K562 (cell line): ENCODE measurements at regions of chr1 and their contacts with region 1.

Region 1: DNA sequence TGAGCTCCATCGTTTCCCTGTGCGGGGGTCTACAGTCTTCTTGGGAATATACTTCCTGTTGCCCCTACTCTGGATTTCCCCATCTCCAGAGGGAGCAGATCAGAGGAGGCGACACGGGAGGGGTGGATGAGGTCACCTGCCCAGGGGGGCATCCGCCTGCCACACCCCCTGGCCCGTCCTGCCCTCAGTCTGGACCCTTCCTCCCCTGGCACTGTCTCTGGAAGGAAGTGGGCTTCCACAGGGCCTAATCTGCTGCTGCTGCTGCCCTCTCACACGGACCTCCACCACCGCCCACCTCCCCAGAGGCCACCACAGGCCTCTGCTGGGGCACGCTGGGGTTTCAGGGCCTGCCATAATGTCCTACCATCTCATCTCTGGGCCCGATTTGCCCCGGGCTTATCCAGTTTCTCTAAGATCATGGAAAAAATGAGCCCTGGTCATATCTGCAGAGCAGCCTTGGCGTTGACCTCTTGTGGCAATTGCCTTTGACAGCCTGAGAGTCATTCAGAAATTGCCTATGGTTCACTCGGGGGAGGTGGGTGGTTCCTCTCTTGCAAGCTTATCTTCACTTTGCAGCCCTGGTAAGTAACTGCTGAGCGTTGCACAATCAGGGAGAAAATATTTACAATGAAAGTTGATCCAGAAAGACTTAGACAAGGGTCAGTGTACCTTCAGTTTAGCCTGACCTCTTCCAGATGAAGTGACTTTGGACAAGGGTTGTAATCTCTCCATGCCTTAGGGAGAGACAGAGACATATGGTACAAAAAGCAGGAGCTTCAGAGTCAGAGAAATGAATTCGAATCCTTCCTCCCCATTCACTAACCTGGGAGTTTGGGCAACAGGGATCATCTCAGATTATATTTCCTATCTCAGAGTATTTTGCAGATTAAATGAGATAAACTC is 252.4 kb downstream of the TOMM20 start:
- DNase-seq: peak; percentile 94 to 99 (median 95)
- ATAC-seq: peak; percentile 89
- H3K4me3 ChIP-seq: no peak overlapping the region
- H3K27ac ChIP-seq: peak overlapping the region; percentile 87
- H3K4me1 ChIP-seq: peaks cover 56 to 75% of the 10 kb centered on the region in 2 experiments
- H3K27me3 ChIP-seq: no peaks in the 10 kb centered on the region
- CTCF ChIP-seq: peak in 1 of 3 experiments; percentile 31; a peak in 1 of 6 replicates
- EP300 ChIP-seq: peak; percentile 100
- POLR2A ChIP-seq: no peak
- RAD21 ChIP-seq: peak; percentile 63 to 68

Region 2: GRCh38 chr1:234610348-234611152 is 265.7 kb before region 1 on chr1:
- CTCF ChIA-PET with region 1: no interaction called
- POLR2A ChIA-PET with region 1: interaction called, 10 read pairs
- in situ Hi-C with region 1: loop called (anchors 5 kb)
- intact Hi-C with region 1: loop called (anchors 2 kb)
- DNase-seq: peak; percentile 70 to 84 (median 74)
- ATAC-seq: peak; percentile 3
- H3K4me3 ChIP-seq: peak overlapping the region; percentile 38
- H3K27ac ChIP-seq: peak overlapping the region; percentile 82
- H3K4me1 ChIP-seq: peaks cover 41 to 49% of the 10 kb centered on the region in 2 experiments
- H3K27me3 ChIP-seq: no peaks in the 10 kb centered on the region
- CTCF ChIP-seq: no peak; a peak in 1 of 6 replicates
- EP300 ChIP-seq: no peak
- POLR2A ChIP-seq: peak; percentile 78
- RAD21 ChIP-seq: peak in 1 of 2 experiments; percentile 36; a peak in 2 of 4 replicates

Region 3: GRCh38 chr1:234621657-234622335 is 254.4 kb before region 1 on chr1:
- CTCF ChIA-PET with region 1: no interaction called
- POLR2A ChIA-PET with region 1: no interaction called
- in situ Hi-C with region 1: no loop called
- intact Hi-C with region 1: no loop called
- DNase-seq: no peak
- ATAC-seq: peak; percentile 31; the same call in 2 of the 3 replicates
- H3K4me3 ChIP-seq: no peak overlapping the region
- H3K27ac ChIP-seq: no peak overlapping the region
- H3K4me1 ChIP-seq: peaks cover 0 to 14% of the 10 kb centered on the region in 2 experiments; a peak in 2 of 5 replicates
- H3K27me3 ChIP-seq: no peaks in the 10 kb centered on the region
- CTCF ChIP-seq: no peak
- EP300 ChIP-seq: no peak
- POLR2A ChIP-seq: no peak
- RAD21 ChIP-seq: no peak

Region 4: DNA sequence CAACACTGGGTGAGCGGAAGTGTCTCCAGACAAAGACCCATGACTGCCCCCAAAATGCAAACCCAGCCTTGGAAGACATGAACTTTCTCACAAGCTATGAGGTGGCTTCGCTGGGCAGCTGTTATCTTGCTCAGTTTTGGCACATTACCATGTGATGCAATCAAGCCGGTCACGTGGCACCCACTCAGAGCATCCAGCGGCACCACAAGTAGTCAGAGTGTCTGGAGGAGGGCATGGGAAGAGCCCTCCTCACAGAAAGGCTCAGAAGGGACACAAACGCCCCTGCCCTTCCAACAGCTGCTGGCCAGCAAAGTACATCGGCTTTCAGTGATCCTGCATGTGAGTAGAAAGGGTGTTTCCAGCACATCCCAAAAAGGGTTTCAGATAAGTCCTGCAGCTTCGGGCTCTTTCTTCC is 120.7 kb before region 1 on chr1:
- CTCF ChIA-PET with region 1: no interaction called
- POLR2A ChIA-PET with region 1: no interaction called
- in situ Hi-C with region 1: no loop called
- intact Hi-C with region 1: loop called (anchors 5 kb)
- DNase-seq: peak in 2 of 4 experiments; percentile 27 to 66
- ATAC-seq: peak; percentile 69
- H3K4me3 ChIP-seq: no peak overlapping the region
- H3K27ac ChIP-seq: no peak overlapping the region
- H3K4me1 ChIP-seq: peaks cover 14 to 36% of the 10 kb centered on the region in 2 experiments; a peak in 4 of 5 replicates
- H3K27me3 ChIP-seq: no peaks in the 10 kb centered on the region
- CTCF ChIP-seq: no peak
- EP300 ChIP-seq: no peak
- POLR2A ChIP-seq: no peak
- RAD21 ChIP-seq: peak in 1 of 2 experiments; percentile 16; a peak in 1 of 4 replicates

Region 5: GRCh38 chr1:234862944-234863515 is 13.2 kb before region 1 on chr1:
- CTCF ChIA-PET with region 1: no interaction called
- POLR2A ChIA-PET with region 1: interaction called, 9 read pairs
- in situ Hi-C with region 1: no loop called
- intact Hi-C with region 1: loop called (anchors 1 kb)
- DNase-seq: no peak
- ATAC-seq: no peak
- H3K4me3 ChIP-seq: no peak overlapping the region
- H3K27ac ChIP-seq: no peak overlapping the region
- H3K4me1 ChIP-seq: peaks cover 26 to 42% of the 10 kb centered on the region in 2 experiments; a peak in 4 of 5 replicates
- H3K27me3 ChIP-seq: no peaks in the 10 kb centered on the region
- CTCF ChIP-seq: no peak
- EP300 ChIP-seq: no peak
- POLR2A ChIP-seq: no peak
- RAD21 ChIP-seq: 0 out of 4 replicates have a peak, but pooled peaks of 1 of the 2 experiments have one; percentile 9

Region 6: DNA sequence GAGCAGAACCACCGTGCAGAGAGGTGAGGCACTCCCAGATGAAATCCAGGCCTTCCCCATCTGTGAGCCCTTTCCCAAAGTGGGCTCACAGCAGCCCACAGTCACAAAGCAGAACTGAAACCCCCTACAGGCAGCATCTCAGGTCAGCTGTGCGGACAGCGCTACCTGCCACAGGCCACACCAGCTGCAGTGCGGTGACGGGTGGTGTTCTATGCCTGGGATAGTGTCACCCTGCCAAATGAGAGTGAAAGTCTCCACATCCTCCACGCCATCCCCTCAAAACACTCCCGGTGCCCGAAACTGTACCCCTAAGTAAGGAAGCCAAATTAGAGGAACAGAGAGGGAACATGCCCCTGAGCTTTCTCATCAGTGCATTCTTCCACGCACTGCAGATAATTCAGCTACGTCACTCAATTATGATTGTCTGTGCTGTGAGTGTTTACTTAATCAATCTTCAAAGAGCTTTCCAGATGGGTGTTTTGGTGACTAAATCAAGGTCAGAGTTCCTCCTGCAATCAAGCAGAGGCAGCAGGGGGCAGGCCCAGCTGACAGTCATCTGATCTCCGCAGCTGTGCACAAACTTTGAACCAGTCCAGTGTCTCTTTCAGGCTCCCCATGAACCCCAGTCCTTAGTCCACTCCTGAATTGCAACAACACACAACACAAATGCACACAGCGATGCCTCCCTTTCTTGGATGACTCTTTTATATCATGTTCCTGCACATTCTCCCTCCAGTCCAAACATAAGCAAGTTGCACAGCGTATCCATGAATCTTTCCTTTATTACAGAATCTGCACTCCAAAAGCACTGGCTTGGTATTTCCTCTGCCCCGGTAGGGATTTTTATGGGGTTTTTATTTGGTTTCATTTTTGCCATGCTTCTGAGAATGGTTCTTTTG is 102.4 kb after region 1 on chr1:
- CTCF ChIA-PET with region 1: no interaction called
- POLR2A ChIA-PET with region 1: interaction called, 3 read pairs
- in situ Hi-C with region 1: no loop called
- intact Hi-C with region 1: loop called (anchors 2 kb)
- DNase-seq: peak; percentile 60 to 84 (median 78)
- ATAC-seq: peak; percentile 16
- H3K4me3 ChIP-seq: no peak overlapping the region
- H3K27ac ChIP-seq: peak overlapping the region; percentile 2; the same call in 1 of the 3 replicates
- H3K4me1 ChIP-seq: peaks cover 49 to 85% of the 10 kb centered on the region in 2 experiments
- H3K27me3 ChIP-seq: no peaks in the 10 kb centered on the region
- CTCF ChIP-seq: peak in 2 of 3 experiments; percentile 10 to 41; a peak in 3 of 6 replicates
- EP300 ChIP-seq: peak; percentile 81
- POLR2A ChIP-seq: no peak
- RAD21 ChIP-seq: peak; percentile 39 to 57